Endothelial cell of umbilical vein (primary cell): ENCODE measurements at regions of chr17 and their contacts with region 1.

Region 1: GRCh38 chr17:67293251-67294203 is 48.5 kb upstream of the HELZ start:
- DNase-seq: peak; percentile 54
- H3K4me3 ChIP-seq: no peak overlapping the region
- H3K27ac ChIP-seq: no peak overlapping the region
- H3K4me1 ChIP-seq: peaks cover 7% of the 10 kb centered on the region
- H3K27me3 ChIP-seq: no peaks in the 10 kb centered on the region
- CTCF ChIP-seq: peak; percentile 60 to 83
- POLR2A ChIP-seq: no peak

Region 2: GRCh38 chr17:67116045-67116719 is 177.3 kb before region 1 on chr17:
- CTCF ChIA-PET with region 1: no interaction called
- POLR2A ChIA-PET with region 1: no interaction called
- dilution Hi-C with region 1: no loop called
- intact Hi-C with region 1: loop called (anchors 10 kb)
- DNase-seq: no peak
- H3K4me3 ChIP-seq: no peak overlapping the region
- H3K27ac ChIP-seq: no peak overlapping the region
- H3K4me1 ChIP-seq: no peaks in the 10 kb centered on the region
- H3K27me3 ChIP-seq: no peaks in the 10 kb centered on the region
- CTCF ChIP-seq: no peak
- POLR2A ChIP-seq: no peak

Region 3: DNA sequence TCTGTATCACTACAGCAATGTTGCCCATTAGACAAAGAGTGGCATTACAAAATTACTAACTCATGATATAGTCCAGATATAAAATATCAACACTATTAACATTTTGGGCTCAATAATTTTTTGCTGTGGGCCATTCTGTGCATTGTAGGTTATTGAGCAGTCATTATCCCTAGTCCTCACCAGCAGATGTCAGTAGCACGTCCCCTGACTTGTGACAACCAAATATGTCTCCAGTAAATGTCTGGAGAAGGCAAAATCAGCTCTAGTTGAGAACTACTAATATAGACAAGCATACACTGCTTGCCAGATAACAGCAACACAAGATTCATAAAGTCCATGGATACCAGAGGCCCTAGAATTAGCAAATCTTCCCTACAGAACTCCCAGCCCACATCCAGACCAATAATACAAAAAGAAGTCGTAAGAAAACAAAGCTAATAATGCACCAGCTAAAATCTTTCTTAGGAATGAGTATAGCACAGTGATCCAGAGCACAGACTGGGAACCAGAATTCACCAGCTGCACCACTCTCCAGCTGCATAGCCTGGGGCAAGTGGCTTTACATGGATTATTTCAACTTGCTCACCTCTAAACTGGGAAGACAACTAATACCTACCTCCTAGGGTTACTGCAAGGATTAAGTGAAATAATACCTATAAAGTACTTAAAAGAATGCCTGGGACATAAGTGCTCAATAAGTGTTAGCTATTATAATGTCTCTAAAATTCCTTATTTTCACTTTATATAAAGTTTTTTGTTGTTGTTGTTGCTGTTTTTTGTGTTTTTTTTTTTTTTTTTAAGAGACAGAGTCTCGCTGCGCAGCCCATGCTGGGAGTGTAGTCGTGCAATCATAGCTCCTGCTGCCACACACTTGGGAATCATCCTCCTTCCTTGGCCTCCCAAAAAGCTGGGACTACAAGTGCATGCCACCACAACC is 72.2 kb before region 1 on chr17:
- CTCF ChIA-PET with region 1: interaction called, 53 read pairs
- POLR2A ChIA-PET with region 1: no interaction called
- dilution Hi-C with region 1: no loop called
- intact Hi-C with region 1: loop called (anchors 1 kb)
- DNase-seq: peak; percentile 63
- H3K4me3 ChIP-seq: no peak overlapping the region
- H3K27ac ChIP-seq: no peak overlapping the region
- H3K4me1 ChIP-seq: peaks cover 16% of the 10 kb centered on the region
- H3K27me3 ChIP-seq: no peaks in the 10 kb centered on the region
- CTCF ChIP-seq: peak; percentile 48 to 65
- POLR2A ChIP-seq: no peak